HEK293 (cell line): ENCODE measurements at regions of chr6 and their contacts with region 1.

Region 1: DNA sequence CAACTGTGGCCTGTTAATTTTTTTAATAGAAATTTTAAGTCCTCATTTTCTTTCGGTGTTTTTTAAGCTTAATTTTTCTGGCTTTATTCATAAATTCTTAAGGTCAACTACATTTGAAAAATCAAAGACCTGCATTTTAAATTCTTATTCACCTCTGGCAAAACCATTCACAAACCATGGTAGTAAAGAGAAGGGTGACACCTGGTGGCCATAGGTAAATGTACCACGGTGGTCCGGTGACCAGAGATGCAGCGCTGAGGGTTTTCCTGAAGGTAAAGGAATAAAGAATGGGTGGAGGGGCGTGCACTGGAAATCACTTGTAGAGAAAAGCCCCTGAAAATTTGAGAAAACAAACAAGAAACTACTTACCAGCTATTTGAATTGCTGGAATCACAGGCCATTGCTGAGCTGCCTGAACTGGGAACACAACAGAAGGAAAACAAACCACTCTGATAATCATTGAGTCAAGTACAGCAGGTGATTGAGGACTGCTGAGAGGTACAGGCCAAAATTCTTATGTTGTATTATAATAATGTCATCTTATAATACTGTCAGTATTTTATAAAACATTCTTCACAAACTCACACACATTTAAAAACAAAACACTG is 10.1 kb downstream of the HFE start:
- H3K4me3 ChIP-seq: no peak overlapping the region
- H3K27ac ChIP-seq: no peak overlapping the region
- H3K4me1 ChIP-seq: no peaks in the 10 kb centered on the region
- CTCF ChIP-seq: no peak

Region 2: GRCh38 chr6:26115226-26115625 is 17.9 kb after region 1 on chr6:
- CTCF ChIA-PET with region 1: interaction called, 12 read pairs
- POLR2A ChIA-PET with region 1: no interaction called
- H3K4me3 ChIP-seq: no peak overlapping the region
- H3K27ac ChIP-seq: no peak overlapping the region
- H3K4me1 ChIP-seq: no peaks in the 10 kb centered on the region
- CTCF ChIP-seq: no peak

Region 3: DNA sequence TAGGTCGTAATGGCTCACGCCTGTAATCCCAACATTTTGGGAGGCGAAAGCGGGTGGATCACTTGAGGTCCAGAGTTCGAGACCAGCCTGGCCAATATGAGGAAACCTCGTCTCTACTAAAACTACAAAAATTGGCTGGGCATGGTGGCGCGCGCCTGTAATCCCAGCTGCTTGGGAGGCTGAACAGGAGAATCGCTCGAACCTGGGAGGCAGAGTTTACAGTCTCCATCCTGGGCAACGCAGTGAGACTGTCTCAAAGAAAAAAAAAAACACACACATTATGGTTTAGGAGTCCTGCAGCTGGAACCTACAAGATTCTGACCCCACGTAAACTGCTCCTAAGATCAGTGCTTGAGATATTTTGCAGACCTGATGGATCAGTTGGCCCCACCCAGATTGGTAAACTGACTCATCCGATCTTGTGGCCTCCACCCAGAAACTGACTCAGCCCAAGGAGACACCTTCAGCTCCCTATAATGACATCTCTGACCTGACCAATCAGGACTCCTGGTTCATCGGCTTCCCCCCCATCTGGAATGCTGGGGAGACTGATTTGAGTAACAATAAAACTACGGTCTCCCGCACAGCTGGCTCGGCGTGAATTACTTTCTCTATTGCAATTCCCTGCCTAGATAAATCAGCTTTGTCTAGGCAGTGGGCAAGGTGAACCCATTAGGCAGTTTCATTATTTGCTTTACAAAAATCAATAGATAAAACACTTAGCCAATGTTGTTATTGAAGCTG is 171.5 kb after region 1 on chr6:
- CTCF ChIA-PET with region 1: no interaction called
- POLR2A ChIA-PET with region 1: no interaction called
- H3K4me3 ChIP-seq: no peak overlapping the region
- H3K27ac ChIP-seq: no peak overlapping the region
- H3K4me1 ChIP-seq: peaks cover 3% of the 10 kb centered on the region; the same call in 1 of the 2 replicates
- CTCF ChIP-seq: no peak